CD4-positive, alpha-beta memory T cell (primary cell): ENCODE measurements at regions of chr17 and their contacts with region 1.

Region 1: DNA sequence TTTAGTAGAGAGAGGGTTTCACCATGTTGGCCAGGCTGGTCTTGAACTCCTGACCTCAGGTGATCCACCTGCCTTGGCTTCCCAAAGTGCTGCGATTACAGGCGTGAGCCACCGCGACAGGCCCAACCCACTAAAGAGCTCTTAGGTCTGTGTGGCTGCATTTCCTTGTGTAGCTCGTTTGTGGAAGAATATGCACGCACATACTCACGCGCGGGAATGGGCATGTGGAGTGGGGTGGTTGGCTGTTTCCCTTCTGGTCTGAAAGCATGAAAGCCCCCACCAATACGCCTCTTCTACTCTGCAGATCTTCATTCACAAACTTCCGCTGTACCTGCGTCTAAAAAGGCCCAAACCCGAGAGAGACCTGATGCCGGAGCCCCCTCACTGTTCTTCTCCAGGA is 10.1 kb downstream of the CHRNB1 start:
- DNase-seq: no peak
- H3K4me3 ChIP-seq: peak overlapping the region; percentile 86 to 93
- H3K4me3 Mint-ChIP-seq: peak overlapping the region; percentile 92 to 100 (median 94)
- H3K27ac ChIP-seq: peak overlapping the region; percentile 73
- H3K27ac Mint-ChIP-seq: peak overlapping the region; percentile 88 to 98 (median 94)
- H3K4me1 ChIP-seq: peaks cover 23% of the 10 kb centered on the region
- H3K4me1 Mint-ChIP-seq: peaks cover 18 to 36% (median 22%) of the 10 kb centered on the region in 4 donors
- H3K27me3 ChIP-seq: no peaks in the 10 kb centered on the region
- H3K27me3 Mint-ChIP-seq: peaks cover 0 to 2% of the 10 kb centered on the region in 2 donors

Region 2: DNA sequence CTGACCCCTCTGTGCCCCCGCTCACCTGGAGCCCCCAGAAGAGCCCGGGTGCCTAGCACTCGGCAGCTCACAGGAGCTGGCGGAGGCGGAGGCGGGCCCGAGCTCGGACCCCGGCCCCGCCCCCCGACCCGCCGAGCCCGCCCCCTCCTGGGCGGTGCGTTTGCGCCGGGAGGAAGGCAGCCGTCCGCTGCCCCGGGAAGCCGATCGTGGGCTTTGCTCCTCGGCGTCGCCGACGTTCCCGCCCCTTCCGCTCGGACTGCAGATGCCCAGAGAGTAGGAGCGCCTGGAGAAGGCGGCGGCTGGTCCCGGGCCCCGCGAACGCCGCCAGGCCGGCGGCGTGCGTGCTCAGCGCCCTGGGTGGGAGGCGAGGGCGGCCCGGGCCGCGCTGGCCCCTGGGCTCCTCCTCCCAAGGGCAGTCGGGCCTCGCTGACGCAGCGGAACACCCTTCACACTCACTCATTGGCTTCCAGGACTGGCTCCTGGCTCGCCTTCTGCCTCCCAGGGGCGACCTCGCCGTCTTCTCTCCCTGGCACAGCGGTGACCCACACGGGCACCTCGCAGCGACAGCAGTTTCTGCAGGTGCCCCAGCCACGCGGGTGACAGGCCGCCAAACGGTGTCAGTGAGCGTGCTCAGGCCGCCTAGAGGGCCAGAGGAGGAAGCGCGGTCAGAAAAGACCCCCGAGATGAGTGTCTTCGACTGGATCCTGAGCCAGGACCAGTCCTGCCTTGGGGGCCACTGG is 60.4 kb before region 1 on chr17 and contains the start of gene PLSCR3:
- CTCF ChIA-PET with region 1: no interaction called
- POLR2A ChIA-PET with region 1: no interaction called
- intact Hi-C with region 1: no loop called
- DNase-seq: peak; percentile 76 to 88 (median 83)
- H3K4me3 ChIP-seq: peak within 1 kb of the TSS; percentile 78 to 94
- H3K4me3 Mint-ChIP-seq: peak within 1 kb of the TSS; percentile 93 to 97 (median 96)
- H3K27ac ChIP-seq: peak within 1 kb of the TSS; percentile 91
- H3K27ac Mint-ChIP-seq: peak within 1 kb of the TSS; percentile 92 to 98 (median 94)
- H3K4me1 ChIP-seq: peaks cover 44% of the 10 kb centered on the region
- H3K4me1 Mint-ChIP-seq: peaks cover 13 to 44% (median 31%) of the 10 kb centered on the region in 4 donors
- H3K27me3 ChIP-seq: no peaks in the 10 kb centered on the region
- H3K27me3 Mint-ChIP-seq: no peaks in the 10 kb centered on the region
- total RNA-seq, gene PLSCR3: 90.3 to 91.9 TPM

Region 3: DNA sequence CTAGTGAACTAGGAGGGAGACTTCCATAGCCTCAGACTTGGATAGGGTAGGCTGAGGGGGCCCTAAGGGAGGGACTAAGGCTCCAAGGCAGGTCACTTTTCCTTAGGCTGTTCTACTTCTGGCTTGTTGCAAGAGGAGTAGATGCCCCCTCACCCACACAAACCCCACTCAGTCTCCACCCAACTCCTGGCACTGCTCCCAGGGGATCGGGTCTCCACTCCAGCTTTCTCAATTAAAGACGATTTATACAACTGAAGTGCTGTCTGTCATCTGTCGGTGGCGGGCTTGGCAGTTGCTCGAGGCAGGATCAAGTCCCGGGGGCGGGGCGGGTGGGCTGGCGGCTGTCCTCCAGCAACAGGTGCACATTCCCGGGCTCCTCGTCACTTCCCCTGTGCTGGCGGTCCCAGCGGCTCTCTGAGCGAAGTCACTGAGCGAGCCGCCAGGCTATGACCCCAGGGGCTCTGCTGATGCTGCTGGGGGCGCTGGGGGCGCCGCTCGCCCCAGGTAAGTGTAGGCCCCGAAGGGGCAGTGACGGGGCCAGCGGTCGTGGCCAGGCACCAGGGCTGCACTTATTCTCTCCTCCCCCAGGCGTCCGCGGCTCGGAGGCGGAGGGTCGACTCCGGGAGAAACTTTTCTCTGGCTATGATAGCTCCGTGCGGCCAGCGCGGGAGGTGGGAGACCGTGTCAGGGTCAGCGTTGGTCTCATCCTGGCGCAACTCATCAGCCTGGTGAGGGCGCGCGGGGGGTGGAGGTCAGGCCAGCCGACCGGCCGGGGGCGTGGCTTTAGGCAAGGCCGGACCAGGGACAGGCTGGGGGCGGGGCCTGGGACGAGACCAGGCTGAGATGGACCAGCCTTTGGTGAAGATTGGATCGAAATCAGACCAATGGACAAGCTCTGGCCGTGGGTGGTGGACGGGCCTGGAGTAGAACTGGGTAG is 10.0 kb before region 1 on chr17 and contains the start of gene CHRNB1:
- CTCF ChIA-PET with region 1: interaction called, 11 read pairs
- POLR2A ChIA-PET with region 1: interaction called, 89 read pairs
- intact Hi-C with region 1: loop called (anchors 1 kb)
- DNase-seq: peak in 1 of 5 donors; percentile 16
- H3K4me3 ChIP-seq: peak within 1 kb of the TSS in 1 of 2 donors; percentile 11
- H3K4me3 Mint-ChIP-seq: peak within 1 kb of the TSS; percentile 75 to 88 (median 83)
- H3K27ac ChIP-seq: no peak within 1 kb of the TSS
- H3K27ac Mint-ChIP-seq: peak within 1 kb of the TSS in 5 of 7 donors; percentile 29 to 76 (median 57)
- H3K4me1 ChIP-seq: peaks cover 31% of the 10 kb centered on the region
- H3K4me1 Mint-ChIP-seq: peaks cover 11 to 40% (median 28%) of the 10 kb centered on the region in 4 donors
- H3K27me3 ChIP-seq: peaks cover 45% of the 10 kb centered on the region
- H3K27me3 Mint-ChIP-seq: peaks cover 39 to 58% of the 10 kb centered on the region in 2 donors
- total RNA-seq, gene CHRNB1: 9.1 to 9.5 TPM

Region 4: DNA sequence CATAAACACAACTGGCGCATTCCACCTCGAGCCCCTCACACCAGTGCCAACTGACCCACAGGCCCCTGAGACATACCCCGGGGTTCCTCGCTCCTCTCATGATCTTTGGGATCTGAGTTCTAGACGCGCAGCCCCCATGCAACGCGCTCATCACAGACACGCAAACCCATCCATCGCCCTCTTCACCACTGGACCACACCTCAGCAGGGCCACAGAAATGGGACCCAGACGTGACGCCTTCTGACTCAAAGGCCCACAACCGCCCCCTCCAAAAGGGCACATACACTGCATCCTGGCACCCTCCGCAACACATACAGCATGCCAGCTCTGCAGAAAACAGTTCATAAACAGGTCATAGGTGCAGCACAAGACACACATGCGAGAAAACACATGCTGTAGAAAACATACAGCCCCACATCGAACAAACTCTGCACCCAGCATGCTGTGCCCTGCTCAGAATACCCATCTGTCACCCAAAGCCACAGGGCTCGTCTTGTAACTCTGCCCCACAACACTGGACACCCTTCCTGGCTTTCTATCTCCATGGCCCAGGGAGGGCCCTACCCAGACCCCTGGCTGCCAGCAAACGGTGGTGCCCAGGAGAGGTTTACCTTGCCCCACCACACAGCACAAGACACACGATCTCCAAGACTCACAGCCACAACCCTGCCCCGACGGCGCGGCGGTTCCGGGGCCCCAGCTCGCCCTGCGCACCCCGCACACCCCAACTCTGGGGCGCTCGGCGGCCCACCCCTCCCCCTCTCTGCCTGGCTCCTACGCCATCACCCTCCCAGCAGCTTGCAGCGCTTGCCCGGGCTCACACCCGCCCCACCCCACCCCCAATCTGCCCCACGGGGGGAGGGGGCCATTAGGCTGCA is 23.5 kb after region 1 on chr17:
- CTCF ChIA-PET with region 1: interaction called, 10 read pairs
- POLR2A ChIA-PET with region 1: interaction called, 398 read pairs
- intact Hi-C with region 1: loop called (anchors 1 kb)
- DNase-seq: peak; percentile 70 to 79 (median 74)
- H3K4me3 ChIP-seq: peak overlapping the region; percentile 64 to 83
- H3K4me3 Mint-ChIP-seq: peak overlapping the region; percentile 89 to 97 (median 94)
- H3K27ac ChIP-seq: peak overlapping the region; percentile 97
- H3K27ac Mint-ChIP-seq: peak overlapping the region; percentile 74 to 97 (median 97)
- H3K4me1 ChIP-seq: peaks cover 62% of the 10 kb centered on the region
- H3K4me1 Mint-ChIP-seq: peaks cover 45 to 77% (median 64%) of the 10 kb centered on the region in 4 donors
- H3K27me3 ChIP-seq: no peaks in the 10 kb centered on the region
- H3K27me3 Mint-ChIP-seq: no peaks in the 10 kb centered on the region